Ascending aorta (tissue), 2 donors: ENCODE measurements at regions of chr22 and their contacts with region 1.

Region 1: GRCh38 chr22:36775964-36776669 is at the start of gene IFT27:
- DNase-seq: peak; percentile 99 to 100
- H3K4me3 ChIP-seq: peak within 1 kb of the TSS; percentile 76 to 90
- H3K27ac ChIP-seq: peak within 1 kb of the TSS; percentile 75 to 79
- H3K4me1 ChIP-seq: peaks cover 0 to 10% of the 10 kb centered on the region in 2 donors
- H3K27me3 ChIP-seq: no peaks in the 10 kb centered on the region
- CTCF ChIP-seq: no peak
- total RNA-seq, gene IFT27: 2.7 TPM

Region 2: GRCh38 chr22:36528795-36529751 is 247.0 kb before region 1 on chr22 and contains the start of gene EIF3D:
- intact Hi-C with region 1: loop called (anchors 1 kb)
- DNase-seq: peak; percentile 95 to 99
- H3K4me3 ChIP-seq: peak within 1 kb of the TSS; percentile 80
- H3K27ac ChIP-seq: peak within 1 kb of the TSS; percentile 88 to 93
- H3K4me1 ChIP-seq: peaks cover 0 to 11% of the 10 kb centered on the region in 2 donors
- H3K27me3 ChIP-seq: no peaks in the 10 kb centered on the region
- CTCF ChIP-seq: no peak
- total RNA-seq, gene EIF3D: 212 TPM

Region 3: DNA sequence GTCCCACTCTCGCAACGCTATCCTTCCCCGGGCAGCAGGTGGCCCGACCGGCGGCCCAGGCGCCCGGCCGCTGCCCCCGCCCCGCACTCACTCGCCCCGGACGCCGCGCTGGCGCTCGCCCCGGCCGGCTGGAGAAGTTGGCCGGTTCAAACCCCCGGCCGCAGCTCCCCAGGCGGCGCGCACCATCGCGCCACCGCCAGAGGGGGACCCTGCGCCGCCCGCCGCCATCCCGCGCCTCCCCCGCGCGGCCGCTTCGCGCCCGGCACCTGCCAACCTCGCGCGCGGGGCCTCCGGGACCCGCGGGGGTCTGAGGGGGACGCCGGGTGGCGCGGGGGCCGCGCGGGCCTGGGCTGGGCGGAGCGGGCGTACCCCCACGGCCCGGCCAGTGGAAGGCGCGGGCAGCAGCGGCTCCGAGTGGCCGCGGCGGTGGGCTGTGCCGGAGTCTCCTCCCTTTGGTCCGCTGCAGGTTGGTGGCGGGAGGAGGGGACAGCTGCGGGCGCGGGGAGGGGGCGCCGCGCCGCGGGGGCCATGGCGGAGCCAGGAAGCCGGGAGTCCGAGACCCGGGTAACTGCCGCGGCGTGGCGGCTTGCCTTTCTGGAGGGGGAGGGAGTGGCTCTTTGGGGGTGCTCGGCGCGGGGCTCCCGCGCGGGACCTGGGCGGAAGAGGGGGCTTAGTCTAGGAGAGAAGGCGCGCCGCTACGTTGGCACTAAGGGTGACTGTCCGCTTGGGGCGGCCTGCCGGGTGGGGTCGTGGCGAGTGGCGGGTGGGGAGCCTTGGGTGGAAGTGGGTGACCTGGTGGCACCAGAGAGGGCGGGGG is 243.4 kb after region 1 on chr22 and contains the starts of genes MPST and TST:
- intact Hi-C with region 1: loop called (anchors 2 kb)
- DNase-seq: peak; percentile 13 to 81
- H3K4me3 ChIP-seq: peak within 1 kb of the TSS; percentile 88 to 98
- H3K27ac ChIP-seq: peak within 1 kb of the TSS; percentile 88 to 95
- H3K4me1 ChIP-seq: peaks cover 11 to 41% of the 10 kb centered on the region in 2 donors
- H3K27me3 ChIP-seq: no peaks in the 10 kb centered on the region
- CTCF ChIP-seq: peak in 2 of 3 experiments; percentile 11 to 73
- total RNA-seq, gene MPST: 113 TPM
- total RNA-seq, gene TST: 22.7 TPM

Region 4: DNA sequence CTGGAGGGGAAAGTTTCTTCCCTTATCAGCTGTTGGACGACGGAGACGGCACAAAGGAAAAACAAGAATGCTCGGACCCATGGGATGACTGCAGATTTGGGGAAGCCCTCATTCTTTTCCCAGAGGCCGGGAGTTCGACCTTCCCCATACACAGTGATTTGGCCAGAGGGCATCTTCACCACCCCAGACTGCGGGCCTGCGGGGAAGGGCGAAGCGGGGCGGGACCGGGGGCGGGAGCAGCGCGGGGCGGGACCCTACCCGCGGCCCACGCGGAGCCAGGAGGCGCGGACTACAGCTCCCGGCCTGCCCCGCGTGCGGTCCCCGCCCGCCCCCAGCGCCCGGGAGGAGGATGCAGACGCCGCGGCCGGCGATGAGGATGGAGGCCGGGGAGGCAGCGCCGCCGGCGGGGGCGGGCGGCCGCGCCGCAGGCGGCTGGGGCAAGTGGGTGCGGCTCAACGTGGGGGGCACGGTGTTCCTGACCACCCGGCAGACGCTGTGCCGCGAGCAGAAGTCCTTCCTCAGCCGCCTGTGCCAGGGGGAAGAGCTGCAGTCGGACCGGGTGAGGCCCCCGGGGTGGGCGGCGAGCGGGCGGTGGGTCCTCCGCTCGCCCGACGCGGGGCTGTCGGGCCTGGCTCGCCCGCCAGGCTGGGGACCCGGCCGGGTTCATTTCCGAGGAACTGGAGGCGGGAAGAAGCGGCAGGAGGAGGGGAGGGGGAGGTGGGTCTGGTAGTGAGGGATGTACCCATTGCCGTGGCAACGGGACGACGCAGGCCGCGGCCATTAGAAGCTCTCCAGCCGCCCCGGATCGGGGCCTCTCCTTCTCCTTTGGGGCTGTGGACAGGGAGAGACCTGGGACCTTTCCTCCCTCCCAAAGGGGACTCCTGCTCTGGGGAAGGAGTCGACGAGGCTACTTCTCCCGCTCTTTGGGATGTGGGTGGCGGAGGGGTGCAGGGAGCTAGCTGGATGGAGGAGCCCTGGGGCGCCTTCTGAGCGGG is 275.6 kb after region 1 on chr22 and contains the start of gene KCTD17:
- intact Hi-C with region 1: loop called (anchors 5 kb)
- DNase-seq: peak in 1 of 2 donors; percentile 83
- H3K4me3 ChIP-seq: peak within 1 kb of the TSS; percentile 87 to 95
- H3K27ac ChIP-seq: no peak within 1 kb of the TSS
- H3K4me1 ChIP-seq: peaks cover 6 to 8% of the 10 kb centered on the region in 2 donors
- H3K27me3 ChIP-seq: no peaks in the 10 kb centered on the region
- CTCF ChIP-seq: no peak
- total RNA-seq, gene KCTD17: 34.9 TPM

Region 5: DNA sequence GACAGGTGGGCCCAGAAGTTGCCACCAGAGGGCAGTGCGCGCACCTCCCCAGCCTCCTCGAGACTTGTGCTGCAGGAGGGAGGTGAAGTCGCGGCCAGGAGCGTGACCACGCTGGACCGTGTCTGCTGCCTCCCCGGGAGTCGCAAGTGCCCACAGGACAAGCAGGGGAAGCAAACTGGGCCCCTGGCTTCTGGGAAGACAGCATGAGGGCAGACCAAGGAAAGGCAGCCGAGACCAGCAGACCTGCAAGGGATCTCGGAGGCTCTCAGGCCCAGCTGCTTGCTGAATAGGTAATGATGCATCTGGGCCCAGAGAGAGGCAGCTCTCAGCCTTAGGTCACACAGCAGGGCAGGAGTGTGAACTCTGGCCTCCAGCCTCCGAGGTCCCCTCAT is 390.6 kb after region 1 on chr22:
- intact Hi-C with region 1: loop called (anchors 5 kb)
- DNase-seq: peak in 1 of 2 donors; percentile 89
- H3K4me3 ChIP-seq: peak overlapping the region in 1 of 2 donors; percentile 43
- H3K27ac ChIP-seq: no peak overlapping the region
- H3K4me1 ChIP-seq: peaks cover 0 to 9% of the 10 kb centered on the region in 2 donors
- H3K27me3 ChIP-seq: no peaks in the 10 kb centered on the region
- CTCF ChIP-seq: peak; percentile 79 to 95 (median 91)

Region 6: GRCh38 chr22:37199103-37199759 is 423.1 kb after region 1 on chr22:
- intact Hi-C with region 1: loop called (anchors 2 kb)
- DNase-seq: peak; percentile 89 to 99
- H3K4me3 ChIP-seq: peak overlapping the region; percentile 70 to 78
- H3K27ac ChIP-seq: peak overlapping the region; percentile 88 to 92
- H3K4me1 ChIP-seq: peaks cover 15 to 26% of the 10 kb centered on the region in 2 donors
- H3K27me3 ChIP-seq: no peaks in the 10 kb centered on the region
- CTCF ChIP-seq: peak; percentile 90 to 96 (median 93)

Region 7: GRCh38 chr22:37544955-37545699 is 769.0 kb after region 1 on chr22:
- intact Hi-C with region 1: loop called (anchors 10 kb)
- DNase-seq: peak in 1 of 2 donors; percentile 83
- H3K4me3 ChIP-seq: peak overlapping the region; percentile 35 to 44
- H3K27ac ChIP-seq: peak overlapping the region; percentile 93 to 99
- H3K4me1 ChIP-seq: peaks cover 23 to 50% of the 10 kb centered on the region in 2 donors
- H3K27me3 ChIP-seq: no peaks in the 10 kb centered on the region
- CTCF ChIP-seq: peak; percentile 58 to 86 (median 77)